ENCODE measurements at regions of chr5 and their contacts with region 1.

Region 1: DNA sequence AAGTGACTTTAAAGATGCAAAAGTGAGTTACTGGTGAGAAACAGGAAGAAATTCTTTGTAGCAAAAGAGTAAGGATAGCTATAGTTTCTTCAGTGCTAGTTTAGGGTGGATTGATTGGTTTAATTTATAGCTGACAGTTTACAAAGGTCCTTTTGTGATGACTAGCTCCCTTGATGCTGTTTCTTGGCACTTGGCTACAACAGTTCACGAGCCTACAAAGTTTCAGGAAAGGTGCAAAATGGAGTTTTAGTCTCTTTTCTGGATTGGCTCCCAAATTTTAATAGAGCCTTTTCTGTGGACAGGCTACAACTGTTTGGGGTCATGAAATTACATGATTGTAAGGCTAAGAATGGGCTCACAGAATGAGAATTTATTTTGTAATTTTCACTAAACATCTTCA is 40.9 kb upstream of the BNIP1 start:
- DNase-seq: no peak
- H3K4me3 Mint-ChIP-seq: no peak overlapping the region
- H3K27ac Mint-ChIP-seq: no peak overlapping the region
- H3K4me1 Mint-ChIP-seq: peaks cover 43% of the 10 kb centered on the region
- H3K27me3 Mint-ChIP-seq: no peaks in the 10 kb centered on the region

Region 2: GRCh38 chr5:173114536-173114935 is 11.1 kb after region 1 on chr5:
- CTCF ChIA-PET with region 1: interaction called, 4 read pairs
- intact Hi-C with region 1: loop called (anchors 2 kb)
- DNase-seq: no peak
- H3K4me3 Mint-ChIP-seq: no peak overlapping the region
- H3K27ac Mint-ChIP-seq: no peak overlapping the region
- H3K4me1 Mint-ChIP-seq: peaks cover 7% of the 10 kb centered on the region
- H3K27me3 Mint-ChIP-seq: no peaks in the 10 kb centered on the region

Region 3: GRCh38 chr5:173547579-173547978 is 444.2 kb after region 1 on chr5:
- CTCF ChIA-PET with region 1: no interaction called
- intact Hi-C with region 1: no loop called
- DNase-seq: no peak
- H3K4me3 Mint-ChIP-seq: no peak overlapping the region
- H3K27ac Mint-ChIP-seq: no peak overlapping the region
- H3K4me1 Mint-ChIP-seq: no peaks in the 10 kb centered on the region
- H3K27me3 Mint-ChIP-seq: peaks cover 2% of the 10 kb centered on the region

Measured in activated naive CD4-positive, alpha-beta T cell treated with anti-CD3 and anti-CD28 coated beads for 36 hours (primary cell).